ENCODE measurements at regions of chr5 and their contacts with region 1.

Region 1: GRCh38 chr5:139341650-139342422 is at the start of gene PAIP2:
- DNase-seq: peak; percentile 85
- H3K4me3 ChIP-seq: peak within 1 kb of the TSS; percentile 100
- CTCF ChIP-seq: peak; percentile 85

Region 2: GRCh38 chr5:139164020-139164419 is 177.8 kb before region 1 on chr5:
- CTCF ChIA-PET with region 1: no interaction called
- POLR2A ChIA-PET with region 1: no interaction called
- DNase-seq: no peak
- H3K4me3 ChIP-seq: no peak overlapping the region
- CTCF ChIP-seq: no peak

Region 3: DNA sequence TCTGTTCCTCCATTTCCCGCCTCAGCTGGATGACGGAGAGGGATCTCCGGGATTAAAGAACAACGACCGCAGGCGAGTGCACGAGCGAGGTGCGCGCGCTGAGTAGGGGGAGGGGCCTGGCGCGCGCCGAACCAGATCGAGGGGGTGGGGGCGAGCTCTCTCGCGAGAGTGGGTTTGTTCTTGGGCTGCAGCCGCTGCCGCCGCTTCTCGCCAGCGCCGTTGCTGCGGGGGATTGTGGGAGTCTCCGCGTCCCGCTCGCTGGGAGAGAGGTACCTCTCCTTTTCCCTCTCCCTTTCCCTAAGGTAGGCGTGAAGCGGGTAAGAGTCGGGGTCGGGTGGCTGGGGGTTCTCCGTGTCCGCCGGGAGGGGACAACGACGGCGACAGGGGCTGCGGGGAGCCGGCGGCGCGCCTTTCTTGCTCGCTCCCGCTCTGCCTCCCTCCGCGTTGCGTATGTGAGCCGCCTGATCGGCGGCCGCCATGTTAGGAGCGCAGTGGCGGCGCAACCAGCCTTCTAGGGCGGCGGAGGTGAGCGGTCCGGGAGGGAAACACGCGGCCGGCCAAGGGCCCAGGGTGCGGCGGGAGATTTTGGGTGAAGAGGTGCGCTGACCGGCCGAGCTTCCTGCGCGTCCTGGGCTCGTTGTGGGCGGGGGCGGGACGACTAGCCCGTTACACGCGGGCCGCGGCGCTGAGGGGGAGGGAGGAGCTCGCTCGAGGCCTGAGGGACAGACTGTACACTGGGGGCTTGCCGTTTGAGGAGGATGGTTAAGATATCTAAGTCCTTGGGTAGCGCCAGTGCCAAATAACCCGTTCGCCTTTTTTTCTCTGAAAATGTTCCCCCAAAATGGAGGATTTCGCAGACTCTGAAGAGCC is 48.1 kb before region 1 on chr5 and contains the start of gene MATR3:
- CTCF ChIA-PET with region 1: interaction called, 3 read pairs
- POLR2A ChIA-PET with region 1: interaction called, 20 read pairs
- DNase-seq: peak; percentile 57
- H3K4me3 ChIP-seq: peak within 1 kb of the TSS; percentile 85
- CTCF ChIP-seq: no peak

Measured in AG04449 (cell line).